A549 (cell line): ENCODE measurements at regions of chr5 and their contacts with region 1.

Region 1: DNA sequence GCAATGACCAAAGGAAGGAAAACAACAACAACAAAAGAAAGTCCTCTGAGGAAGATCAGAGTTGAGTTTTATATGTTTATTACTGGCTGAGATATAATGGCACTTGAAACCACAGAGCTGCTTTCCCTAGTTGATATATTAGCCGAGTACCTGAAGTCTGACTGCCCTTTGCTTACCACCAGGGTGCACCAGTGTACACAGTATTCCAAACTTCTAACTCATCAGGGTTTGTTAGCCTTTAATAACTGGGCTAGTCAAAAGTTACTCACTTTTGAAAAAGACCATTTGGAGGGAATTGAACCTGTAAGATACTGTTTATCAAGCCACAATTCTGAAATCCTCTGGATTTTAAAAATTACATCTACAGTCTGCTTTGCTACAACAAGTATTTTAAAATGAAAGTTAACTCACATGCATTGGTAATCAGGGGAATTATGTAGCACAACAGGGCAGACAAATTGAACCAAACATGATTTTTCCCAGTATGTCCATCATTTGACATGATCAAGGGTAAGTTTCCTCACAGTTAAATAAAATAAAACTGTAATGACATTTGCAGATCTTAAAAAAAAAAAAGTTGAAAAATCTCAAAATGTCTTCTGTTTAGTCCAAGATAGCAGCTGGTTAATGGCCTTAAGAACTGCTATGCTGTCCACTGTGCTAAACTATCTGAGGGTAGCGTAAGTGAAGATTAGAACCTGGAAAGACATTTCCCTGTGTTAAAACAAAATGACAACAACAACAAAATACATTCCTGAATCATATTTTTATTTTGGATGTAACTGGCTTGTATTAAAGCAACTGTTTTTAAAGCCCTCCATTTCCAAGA is 57.3 kb upstream of the C6 start:
- DNase-seq: peak; percentile 12 to 66
- ATAC-seq: peak; percentile 90 to 95
- H3K4me3 ChIP-seq: no peak overlapping the region
- H3K27ac ChIP-seq: no peak overlapping the region
- H3K4me1 ChIP-seq: no peaks in the 10 kb centered on the region
- CTCF ChIP-seq: peak; percentile 85
- EP300 ChIP-seq: no peak
- POLR2A ChIP-seq: no peak
- RAD21 ChIP-seq: peak; percentile 92 to 94

Region 2: DNA sequence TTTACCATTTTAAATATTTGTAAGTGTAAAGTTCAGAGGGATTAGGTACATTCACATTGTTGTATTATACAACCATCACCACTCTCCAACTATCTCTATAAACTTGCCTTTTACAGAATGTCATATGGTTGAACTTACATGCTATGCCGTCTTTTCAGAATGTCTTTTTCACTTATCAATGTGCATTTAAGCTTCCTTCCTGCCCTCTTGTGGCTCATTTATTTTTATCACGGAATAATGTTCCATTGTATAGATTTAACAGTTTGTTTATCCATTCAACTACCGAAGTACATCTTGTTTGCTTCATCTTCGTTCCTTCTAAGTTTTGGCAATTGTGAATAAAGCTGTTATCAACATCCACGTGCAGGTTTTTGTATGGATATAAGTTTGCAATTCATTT is 76.0 kb after region 1 on chr5:
- CTCF ChIA-PET with region 1: no interaction called
- POLR2A ChIA-PET with region 1: no interaction called
- DNase-seq: peak in 1 of 2 experiments; percentile 12
- ATAC-seq: no peak
- H3K4me3 ChIP-seq: no peak overlapping the region
- H3K27ac ChIP-seq: no peak overlapping the region
- H3K4me1 ChIP-seq: no peaks in the 10 kb centered on the region
- CTCF ChIP-seq: peak; percentile 8; the same call in 1 of the 3 replicates
- EP300 ChIP-seq: no peak
- POLR2A ChIP-seq: no peak
- RAD21 ChIP-seq: peak in 1 of 2 experiments; percentile 34; a peak in 1 of 5 replicates

Region 3: DNA sequence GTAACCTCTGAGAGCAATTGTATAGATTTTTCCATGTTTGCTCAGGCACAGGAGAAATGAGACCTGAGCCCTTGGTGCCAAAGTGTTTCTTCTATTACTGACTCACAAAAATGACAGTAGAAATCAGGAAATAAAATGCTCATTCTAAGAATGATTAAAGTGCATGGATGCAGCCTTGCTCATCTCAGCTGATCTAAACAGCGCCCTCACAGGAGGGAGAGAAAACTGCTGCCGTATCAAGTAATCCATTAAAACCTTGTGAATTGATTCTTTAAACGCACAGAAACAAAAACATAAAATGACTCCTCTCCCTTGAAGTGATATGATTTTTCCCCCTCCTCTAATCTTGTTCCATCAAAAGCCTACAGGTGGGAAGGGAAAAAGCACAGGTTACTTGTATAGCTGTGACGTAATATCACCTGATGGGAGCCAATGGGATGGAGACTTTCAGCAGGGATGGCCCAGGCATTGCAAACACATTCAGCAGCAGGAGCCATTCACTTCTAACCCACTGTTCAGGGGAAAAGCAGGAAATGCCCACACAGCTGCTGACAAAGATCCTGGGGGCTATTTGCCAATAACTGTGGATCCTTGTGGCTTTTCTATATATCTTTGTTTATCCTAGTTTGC is 163.0 kb after region 1 on chr5:
- CTCF ChIA-PET with region 1: no interaction called
- POLR2A ChIA-PET with region 1: no interaction called
- DNase-seq: no peak
- ATAC-seq: peak in 1 of 2 experiments; percentile 55; a peak in 2 of 6 replicates
- H3K4me3 ChIP-seq: no peak overlapping the region
- H3K27ac ChIP-seq: no peak overlapping the region; a peak in 1 of 6 replicates
- H3K4me1 ChIP-seq: peaks cover 12% of the 10 kb centered on the region; the same call in 2 of the 3 replicates
- CTCF ChIP-seq: peak; percentile 34; the same call in 1 of the 3 replicates
- EP300 ChIP-seq: no peak
- POLR2A ChIP-seq: no peak
- RAD21 ChIP-seq: peak in 1 of 2 experiments; percentile 11; a peak in 1 of 5 replicates

Region 4: DNA sequence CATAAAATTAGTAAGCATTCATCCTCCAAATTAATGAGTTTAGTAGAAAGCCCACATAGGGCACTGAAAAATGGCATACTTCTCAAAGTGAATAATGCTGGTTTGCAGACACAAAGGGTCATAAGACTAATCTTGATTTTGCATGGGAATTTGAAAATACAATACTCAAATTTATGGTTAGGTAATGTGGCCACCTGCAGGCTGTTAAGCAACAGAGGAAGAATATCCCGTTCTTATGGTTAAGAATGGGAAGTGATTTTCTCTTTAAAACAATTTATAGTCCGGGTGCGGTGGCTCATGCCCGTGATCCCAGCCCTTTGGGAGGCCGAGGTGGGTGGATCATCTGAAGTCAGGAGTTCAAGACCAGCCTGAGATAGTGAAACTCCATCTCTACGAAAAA is 249.2 kb after region 1 on chr5:
- CTCF ChIA-PET with region 1: interaction called, 17 read pairs
- POLR2A ChIA-PET with region 1: interaction called, 4 read pairs
- DNase-seq: peak in 1 of 2 experiments; percentile 52
- ATAC-seq: peak; percentile 43 to 62; a peak in 3 of 6 replicates
- H3K4me3 ChIP-seq: no peak overlapping the region
- H3K27ac ChIP-seq: no peak overlapping the region
- H3K4me1 ChIP-seq: no peaks in the 10 kb centered on the region
- CTCF ChIP-seq: peak; percentile 58
- EP300 ChIP-seq: no peak
- POLR2A ChIP-seq: no peak
- RAD21 ChIP-seq: peak; percentile 83

Region 5: DNA sequence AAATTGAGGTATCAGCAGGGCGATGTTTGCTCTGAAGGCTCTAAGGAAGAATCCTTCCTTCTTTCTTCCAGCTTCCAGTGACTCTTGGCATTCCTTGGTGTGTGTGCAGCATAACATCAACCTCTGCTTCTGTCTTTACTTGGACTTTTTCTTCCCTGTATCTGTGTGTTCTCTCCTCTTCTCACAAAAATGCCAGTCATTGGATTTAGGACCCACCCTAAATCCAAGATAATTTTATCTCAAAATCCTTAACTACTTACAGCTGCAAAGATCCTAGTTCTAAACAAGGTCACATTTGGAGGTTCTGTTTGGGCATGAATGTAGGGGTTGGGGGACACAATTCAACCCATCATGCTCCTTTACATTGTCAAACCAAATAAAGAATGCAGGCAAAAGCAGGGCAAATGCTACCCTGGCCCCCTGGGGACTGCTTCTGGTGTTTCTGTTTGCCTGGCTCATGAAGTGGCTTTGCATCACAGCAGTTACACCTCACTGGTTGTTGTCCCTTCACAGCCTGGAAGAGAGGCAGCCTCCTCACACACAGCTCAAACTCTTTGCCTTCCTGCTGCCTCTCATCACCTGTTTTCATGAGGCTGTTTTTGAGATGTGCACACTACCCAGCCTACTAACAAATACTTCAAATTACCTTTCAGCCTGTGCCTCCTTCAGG is 304.6 kb after region 1 on chr5:
- CTCF ChIA-PET with region 1: no interaction called
- POLR2A ChIA-PET with region 1: no interaction called
- DNase-seq: no peak
- ATAC-seq: no peak
- H3K4me3 ChIP-seq: no peak overlapping the region
- H3K27ac ChIP-seq: no peak overlapping the region
- H3K4me1 ChIP-seq: no peaks in the 10 kb centered on the region
- CTCF ChIP-seq: no peak
- EP300 ChIP-seq: no peak
- POLR2A ChIP-seq: no peak
- RAD21 ChIP-seq: no peak

Region 6: DNA sequence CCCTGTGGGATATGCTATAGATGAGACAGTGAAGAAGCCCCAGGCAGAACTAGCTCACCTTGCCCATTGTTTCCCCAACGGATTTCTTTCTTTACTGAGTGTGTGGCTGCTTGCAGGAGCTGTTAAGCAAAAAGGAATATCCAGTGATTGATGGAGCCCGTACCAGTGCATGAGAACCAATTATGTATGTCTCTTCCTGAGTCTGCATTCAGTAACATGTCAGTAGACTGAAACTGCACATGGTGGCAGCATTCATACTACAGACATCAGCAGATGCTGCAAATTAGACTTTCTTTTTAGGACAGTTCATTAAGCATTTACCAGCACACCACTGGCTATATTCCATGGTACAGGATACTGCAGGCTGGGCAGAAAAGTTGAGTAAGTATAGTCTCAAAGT is 330.1 kb after region 1 on chr5:
- CTCF ChIA-PET with region 1: no interaction called
- POLR2A ChIA-PET with region 1: no interaction called
- DNase-seq: no peak
- ATAC-seq: no peak
- H3K4me3 ChIP-seq: no peak overlapping the region
- H3K27ac ChIP-seq: no peak overlapping the region
- H3K4me1 ChIP-seq: no peaks in the 10 kb centered on the region
- CTCF ChIP-seq: no peak
- EP300 ChIP-seq: no peak
- POLR2A ChIP-seq: no peak
- RAD21 ChIP-seq: no peak